B cell (primary cell): ENCODE measurements at regions of chr1 and their contacts with region 1.

Region 1: DNA sequence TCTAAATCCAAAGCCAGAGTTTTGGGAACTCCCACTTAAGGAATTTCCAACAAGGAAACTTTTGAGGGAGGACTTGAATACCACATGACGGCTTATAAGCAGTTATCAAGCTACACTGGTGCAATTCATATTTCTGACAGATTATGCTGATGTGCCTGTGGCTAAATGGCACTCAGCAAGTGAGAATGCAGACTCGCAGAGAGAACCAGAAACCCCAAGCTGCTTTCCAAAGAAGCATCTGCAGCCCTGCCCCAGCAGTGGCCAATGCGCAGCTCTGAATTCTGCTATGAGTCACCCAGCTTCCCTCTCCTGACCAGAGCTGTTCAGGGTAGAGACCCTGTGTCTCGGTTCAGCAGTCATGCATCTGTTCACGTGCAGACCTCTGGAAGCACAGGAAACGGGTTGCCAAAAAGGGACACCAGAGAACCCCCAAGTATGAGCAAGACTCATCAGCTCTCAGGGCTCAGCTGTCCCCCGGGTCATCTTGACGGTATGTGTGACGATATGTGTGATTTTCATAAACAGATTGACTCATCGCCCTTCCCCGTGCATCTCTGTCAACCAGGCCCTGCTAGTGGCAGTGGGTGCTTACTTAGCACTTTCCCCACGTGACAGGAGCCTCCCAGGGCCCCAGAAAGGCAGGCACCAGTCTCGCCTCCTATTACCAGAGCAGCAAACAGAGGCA is 76.3 kb downstream of the ITPKB start:
- DNase-seq: peak; percentile 96
- ATAC-seq: peak; percentile 88
- H3K4me3 ChIP-seq: peak overlapping the region in 2 of 5 experiments; percentile 1
- H3K4me3 Mint-ChIP-seq: peak overlapping the region; percentile 79
- H3K27ac ChIP-seq: peak overlapping the region; percentile 82 to 84
- H3K27ac Mint-ChIP-seq: peak overlapping the region; percentile 95
- H3K4me1 ChIP-seq: peaks cover 70 to 95% of the 10 kb centered on the region in 2 donors
- H3K4me1 Mint-ChIP-seq: peaks cover 97% of the 10 kb centered on the region
- H3K27me3 ChIP-seq: no peaks in the 10 kb centered on the region
- H3K27me3 Mint-ChIP-seq: no peaks in the 10 kb centered on the region
- CTCF ChIP-seq: no peak

Region 2: DNA sequence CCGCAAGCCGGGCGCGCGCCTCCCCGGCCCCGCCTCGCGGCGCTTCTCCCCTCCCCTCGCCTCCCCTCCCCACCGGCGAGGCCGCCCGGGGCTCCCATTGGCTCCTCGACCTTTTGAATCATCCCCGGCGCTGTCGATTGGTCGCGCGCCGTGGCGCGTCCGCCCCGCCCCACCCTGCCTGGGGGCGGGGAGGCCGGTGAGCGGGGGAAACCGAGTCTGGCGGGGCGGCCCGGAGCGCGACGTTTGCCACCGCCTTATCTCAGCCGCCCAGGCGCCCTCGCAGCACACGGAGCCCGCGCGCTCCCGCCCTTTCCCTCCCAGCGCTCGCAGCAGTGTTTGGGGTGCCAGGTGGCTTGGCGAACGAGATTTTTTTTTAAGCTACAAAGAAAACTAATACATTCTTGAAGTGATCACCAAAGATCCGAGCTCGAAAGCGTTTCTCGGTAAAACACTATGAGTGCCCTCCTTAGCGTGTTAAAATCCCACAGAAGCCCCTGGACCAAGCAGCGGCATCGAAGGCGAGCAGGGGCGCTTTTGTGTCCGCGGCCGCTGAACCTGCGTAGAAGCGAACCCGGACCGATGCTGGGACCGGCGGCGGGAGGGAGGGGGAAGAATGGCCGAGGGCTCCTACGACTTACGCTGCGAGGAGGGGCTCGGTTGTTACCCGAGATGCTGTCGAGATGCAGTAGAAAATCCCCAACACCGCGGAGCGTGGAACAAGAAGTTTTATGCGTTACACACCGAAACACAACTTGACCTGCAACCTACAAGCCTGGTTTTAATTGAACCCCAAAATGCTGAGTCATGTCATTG is 1234.5 kb before region 1 on chr1:
- CTCF ChIA-PET with region 1: no interaction called
- POLR2A ChIA-PET with region 1: no interaction called
- intact Hi-C with region 1: loop called (anchors 5 kb)
- DNase-seq: peak; percentile 92
- ATAC-seq: peak; percentile 90
- H3K4me3 ChIP-seq: peak overlapping the region; percentile 74 to 93 (median 91)
- H3K4me3 Mint-ChIP-seq: peak overlapping the region; percentile 85
- H3K27ac ChIP-seq: peak overlapping the region; percentile 78 to 83
- H3K27ac Mint-ChIP-seq: peak overlapping the region; percentile 80
- H3K4me1 ChIP-seq: peaks cover 36 to 41% of the 10 kb centered on the region in 2 donors
- H3K4me1 Mint-ChIP-seq: peaks cover 45% of the 10 kb centered on the region
- H3K27me3 ChIP-seq: no peaks in the 10 kb centered on the region
- H3K27me3 Mint-ChIP-seq: no peaks in the 10 kb centered on the region
- CTCF ChIP-seq: no peak

Region 3: DNA sequence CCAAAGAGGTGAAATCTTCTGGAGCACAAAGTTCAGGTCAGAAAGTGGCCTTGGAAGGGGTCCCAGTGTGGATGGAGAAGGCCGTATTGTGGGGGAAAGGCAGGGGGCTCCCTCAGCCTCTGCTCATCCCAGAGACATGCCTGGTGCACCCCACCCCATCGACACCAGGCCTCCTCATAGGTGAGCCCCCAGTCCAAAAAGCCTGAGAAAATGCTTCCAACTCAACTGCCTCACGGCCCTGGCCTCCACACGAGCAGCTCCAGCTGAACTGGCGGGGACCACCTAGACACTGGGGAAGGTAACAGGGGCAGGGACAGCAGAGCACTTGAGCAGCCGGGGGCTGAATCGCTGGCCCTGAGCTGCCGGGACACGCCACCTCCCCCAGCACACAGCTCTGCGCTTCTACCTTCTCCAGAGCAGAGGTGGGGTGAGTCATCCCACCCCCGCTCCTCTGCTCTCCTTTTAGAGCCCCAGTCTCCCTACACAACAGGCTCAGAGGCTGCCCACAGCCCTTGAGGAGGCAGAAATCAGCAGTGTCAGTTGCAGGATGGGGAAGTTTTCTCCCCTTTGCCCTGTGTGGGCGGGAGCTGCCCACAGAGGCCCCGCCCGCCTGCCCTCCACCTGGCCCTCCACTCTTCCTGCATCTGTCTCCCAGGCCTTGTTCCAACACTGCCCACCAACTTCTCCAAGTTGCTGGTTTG is 19.8 kb before region 1 on chr1:
- CTCF ChIA-PET with region 1: interaction called, 36 read pairs
- POLR2A ChIA-PET with region 1: interaction called, 28 read pairs
- intact Hi-C with region 1: loop called (anchors 1 kb)
- DNase-seq: peak; percentile 62
- ATAC-seq: peak; percentile 48
- H3K4me3 ChIP-seq: no peak overlapping the region
- H3K4me3 Mint-ChIP-seq: peak overlapping the region; percentile 81
- H3K27ac ChIP-seq: peak overlapping the region; percentile 62 to 68
- H3K27ac Mint-ChIP-seq: peak overlapping the region; percentile 91
- H3K4me1 ChIP-seq: peaks cover 57 to 70% of the 10 kb centered on the region in 2 donors
- H3K4me1 Mint-ChIP-seq: peaks cover 71% of the 10 kb centered on the region
- H3K27me3 ChIP-seq: no peaks in the 10 kb centered on the region
- H3K27me3 Mint-ChIP-seq: no peaks in the 10 kb centered on the region
- CTCF ChIP-seq: no peak

Region 4: GRCh38 chr1:226679853-226680516 is 17.2 kb after region 1 on chr1:
- CTCF ChIA-PET with region 1: interaction called, 48 read pairs
- POLR2A ChIA-PET with region 1: interaction called, 17 read pairs
- intact Hi-C with region 1: loop called (anchors 1 kb)
- DNase-seq: peak; percentile 90
- ATAC-seq: peak; percentile 48
- H3K4me3 ChIP-seq: peak overlapping the region; percentile 19 to 63 (median 55)
- H3K4me3 Mint-ChIP-seq: peak overlapping the region; percentile 83
- H3K27ac ChIP-seq: peak overlapping the region; percentile 88 to 94
- H3K27ac Mint-ChIP-seq: peak overlapping the region; percentile 96
- H3K4me1 ChIP-seq: peaks cover 94 to 99% of the 10 kb centered on the region in 2 donors
- H3K4me1 Mint-ChIP-seq: peaks cover 98% of the 10 kb centered on the region
- H3K27me3 ChIP-seq: no peaks in the 10 kb centered on the region
- H3K27me3 Mint-ChIP-seq: no peaks in the 10 kb centered on the region
- CTCF ChIP-seq: no peak

Region 5: DNA sequence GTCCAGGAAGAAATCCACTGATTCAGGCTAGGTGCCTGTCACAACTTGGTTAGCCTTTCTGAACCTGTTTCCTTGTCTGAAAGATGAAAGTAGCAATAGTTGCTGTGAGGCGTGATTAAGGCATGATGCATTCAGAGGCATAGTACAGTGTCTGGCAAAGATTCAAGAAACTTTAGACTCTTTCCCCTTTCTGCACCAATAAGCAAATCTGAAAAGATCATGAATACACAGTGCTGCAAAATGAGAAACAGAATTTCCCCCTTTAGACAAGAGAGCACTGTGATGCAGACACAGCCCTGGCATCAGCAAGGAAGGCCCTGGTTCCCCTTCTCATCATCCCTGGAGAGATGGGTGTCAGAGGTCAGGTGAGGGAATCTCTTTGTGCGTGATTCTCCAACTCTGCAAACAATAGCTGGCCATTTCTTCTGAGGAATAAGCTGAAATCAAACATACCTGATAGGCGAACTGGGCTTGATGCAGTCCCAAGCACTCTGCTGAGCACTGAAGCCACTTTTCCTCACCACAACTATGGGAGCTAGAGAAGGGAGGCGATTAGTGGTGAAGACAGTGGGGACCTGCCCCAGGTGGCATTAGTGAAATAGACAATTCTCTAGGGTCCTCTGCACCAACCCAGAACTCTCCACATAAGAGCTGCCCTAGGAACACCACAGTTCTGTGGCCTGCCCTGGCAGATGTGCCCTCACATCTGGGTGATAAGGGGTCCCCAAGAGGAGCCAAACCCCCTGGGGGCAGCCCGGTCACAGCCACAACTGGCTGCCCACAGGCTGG is 34.6 kb after region 1 on chr1:
- CTCF ChIA-PET with region 1: interaction called, 10 read pairs
- POLR2A ChIA-PET with region 1: interaction called, 7 read pairs
- intact Hi-C with region 1: loop called (anchors 1 kb)
- DNase-seq: peak; percentile 88
- ATAC-seq: peak; percentile 83
- H3K4me3 ChIP-seq: peak overlapping the region in 1 of 5 experiments; percentile 4
- H3K4me3 Mint-ChIP-seq: peak overlapping the region; percentile 75
- H3K27ac ChIP-seq: peak overlapping the region; percentile 93 to 94
- H3K27ac Mint-ChIP-seq: peak overlapping the region; percentile 95
- H3K4me1 ChIP-seq: peaks cover 86 to 93% of the 10 kb centered on the region in 2 donors
- H3K4me1 Mint-ChIP-seq: peaks cover 89% of the 10 kb centered on the region
- H3K27me3 ChIP-seq: no peaks in the 10 kb centered on the region
- H3K27me3 Mint-ChIP-seq: no peaks in the 10 kb centered on the region
- CTCF ChIP-seq: no peak

Region 6: GRCh38 chr1:226731257-226731893 is 68.6 kb after region 1 on chr1:
- CTCF ChIA-PET with region 1: interaction called, 4 read pairs
- POLR2A ChIA-PET with region 1: interaction called, 11 read pairs
- intact Hi-C with region 1: no loop called
- DNase-seq: peak; percentile 3
- ATAC-seq: no peak
- H3K4me3 ChIP-seq: peak overlapping the region in 1 of 5 experiments; percentile 4
- H3K4me3 Mint-ChIP-seq: peak overlapping the region; percentile 76
- H3K27ac ChIP-seq: peak overlapping the region in 1 of 2 donors; percentile 74
- H3K27ac Mint-ChIP-seq: peak overlapping the region; percentile 78
- H3K4me1 ChIP-seq: peaks cover 94 to 96% of the 10 kb centered on the region in 2 donors
- H3K4me1 Mint-ChIP-seq: peaks cover 94% of the 10 kb centered on the region
- H3K27me3 ChIP-seq: no peaks in the 10 kb centered on the region
- H3K27me3 Mint-ChIP-seq: no peaks in the 10 kb centered on the region
- CTCF ChIP-seq: no peak

Region 7: DNA sequence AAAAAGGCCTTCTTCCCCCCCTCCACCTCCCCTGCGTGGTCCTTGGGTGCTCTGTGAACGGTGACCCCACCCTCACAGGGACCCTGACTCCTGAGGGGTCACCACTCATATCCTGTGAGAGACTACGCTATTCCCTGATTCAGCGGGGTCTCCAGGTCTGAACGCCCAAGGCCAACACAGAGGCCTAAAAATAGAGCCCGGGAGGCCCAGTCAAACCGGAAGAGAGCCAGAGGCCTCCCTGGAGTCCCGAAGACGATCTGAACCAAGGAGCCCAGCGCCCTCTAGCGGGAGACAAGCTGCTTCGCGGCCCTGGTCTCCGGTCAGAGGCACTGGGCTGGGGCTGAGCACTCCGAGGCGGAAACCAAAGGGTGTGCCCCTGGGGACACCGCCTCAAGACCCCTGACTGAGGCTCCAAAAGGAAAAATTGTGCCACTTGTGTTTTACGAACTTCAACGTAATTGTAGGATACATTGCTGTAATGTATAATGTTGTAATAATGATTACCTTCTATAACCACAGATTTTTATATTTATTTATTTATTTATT is 165.3 kb after region 1 on chr1:
- CTCF ChIA-PET with region 1: interaction called, 15 read pairs
- POLR2A ChIA-PET with region 1: interaction called, 3 read pairs
- intact Hi-C with region 1: no loop called
- DNase-seq: peak; percentile 91
- ATAC-seq: peak; percentile 96
- H3K4me3 ChIP-seq: peak overlapping the region in 4 of 5 experiments; percentile 21 to 53 (median 34)
- H3K4me3 Mint-ChIP-seq: peak overlapping the region; percentile 67
- H3K27ac ChIP-seq: peak overlapping the region; percentile 48 to 56
- H3K27ac Mint-ChIP-seq: peak overlapping the region; percentile 26
- H3K4me1 ChIP-seq: peaks cover 11 to 35% of the 10 kb centered on the region in 2 donors
- H3K4me1 Mint-ChIP-seq: peaks cover 36% of the 10 kb centered on the region
- H3K27me3 ChIP-seq: no peaks in the 10 kb centered on the region
- H3K27me3 Mint-ChIP-seq: no peaks in the 10 kb centered on the region
- CTCF ChIP-seq: peak; percentile 97